ENCODE measurements at regions of chr11 and their contacts with region 1.

Region 1: GRCh38 chr11:72609045-72609444 is 65.2 kb downstream of the PDE2A start:
- DNase-seq: no peak
- ATAC-seq: peak; percentile 47
- H3K4me3 Mint-ChIP-seq: no peak overlapping the region
- H3K27ac Mint-ChIP-seq: no peak overlapping the region
- H3K4me1 Mint-ChIP-seq: no peaks in the 10 kb centered on the region
- H3K27me3 Mint-ChIP-seq: peaks cover 3% of the 10 kb centered on the region
- CTCF ChIP-seq: no peak

Region 2: DNA sequence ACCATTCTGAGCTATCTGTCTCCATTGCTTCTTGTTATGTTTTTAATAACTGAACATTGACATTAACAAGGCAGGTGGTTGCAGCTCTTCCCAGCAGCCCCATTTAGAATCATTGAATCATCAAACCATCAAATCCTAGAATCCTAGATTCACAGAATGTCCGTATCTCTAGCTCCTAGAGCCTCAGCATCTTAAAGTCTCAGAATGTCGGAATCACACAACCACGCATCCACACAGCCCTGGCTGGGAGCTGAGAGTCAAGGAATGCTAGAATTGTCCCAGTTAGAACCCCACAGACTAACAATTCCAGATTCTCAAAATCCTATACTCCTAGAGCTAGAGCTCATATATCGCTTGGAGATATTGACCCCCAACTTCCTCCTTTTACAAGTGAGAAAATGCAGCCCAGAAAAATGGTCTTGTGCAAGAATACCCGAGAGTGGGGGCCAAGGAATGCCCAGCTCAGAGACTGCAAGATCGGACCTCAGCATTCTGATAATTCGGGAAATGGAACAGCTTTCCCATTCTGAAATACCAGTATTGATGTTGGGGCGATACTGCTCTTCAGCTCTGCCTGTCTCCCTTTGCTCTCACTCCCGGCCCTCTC is 26.4 kb after region 1 on chr11:
- CTCF ChIA-PET with region 1: interaction called, 10 read pairs
- POLR2A ChIA-PET with region 1: no interaction called
- DNase-seq: no peak
- ATAC-seq: no peak
- H3K4me3 Mint-ChIP-seq: no peak overlapping the region
- H3K27ac Mint-ChIP-seq: no peak overlapping the region
- H3K4me1 Mint-ChIP-seq: peaks cover 38% of the 10 kb centered on the region
- H3K27me3 Mint-ChIP-seq: peaks cover 5% of the 10 kb centered on the region
- CTCF ChIP-seq: no peak

Region 3: DNA sequence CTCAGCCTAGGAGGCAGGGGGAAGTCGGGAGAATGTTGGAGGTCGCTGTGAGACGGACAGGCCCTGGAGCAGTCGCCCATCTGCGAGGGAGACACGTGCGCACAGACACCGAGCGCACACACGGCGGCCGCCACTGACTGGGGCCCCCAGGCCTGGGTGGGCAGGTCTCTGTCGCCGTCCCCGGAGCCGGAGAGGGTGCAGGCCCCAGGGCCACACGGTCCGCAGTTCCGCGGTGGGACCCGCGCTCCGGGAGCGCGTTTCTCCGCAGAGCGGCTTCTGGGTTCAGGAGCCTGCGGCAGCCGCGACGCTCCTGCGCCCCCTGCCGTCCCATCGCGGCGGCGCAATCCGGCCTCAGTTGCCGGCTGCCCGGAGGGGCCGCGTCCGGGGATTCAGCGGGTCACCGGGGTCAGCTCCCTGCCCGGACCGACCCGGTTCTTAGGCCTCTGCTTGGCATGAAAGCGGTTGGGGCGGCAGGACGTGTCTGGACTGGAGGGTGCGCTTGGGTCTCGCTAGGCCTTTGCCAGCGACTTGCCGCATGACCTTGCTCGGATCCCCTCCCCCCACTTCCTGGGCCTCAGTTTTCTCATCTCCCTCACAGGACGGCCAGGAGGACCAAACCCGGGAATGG is 34.0 kb after region 1 on chr11:
- CTCF ChIA-PET with region 1: interaction called, 12 read pairs
- POLR2A ChIA-PET with region 1: interaction called, 3 read pairs
- DNase-seq: peak; percentile 74
- ATAC-seq: peak; percentile 79
- H3K4me3 Mint-ChIP-seq: peak overlapping the region; percentile 59
- H3K27ac Mint-ChIP-seq: no peak overlapping the region
- H3K4me1 Mint-ChIP-seq: no peaks in the 10 kb centered on the region
- H3K27me3 Mint-ChIP-seq: peaks cover 26% of the 10 kb centered on the region
- CTCF ChIP-seq: peak; percentile 98

Measured in WTC11 (cell line).